ENCODE measurements at regions of chr3 and their contacts with region 1.

Region 1: DNA sequence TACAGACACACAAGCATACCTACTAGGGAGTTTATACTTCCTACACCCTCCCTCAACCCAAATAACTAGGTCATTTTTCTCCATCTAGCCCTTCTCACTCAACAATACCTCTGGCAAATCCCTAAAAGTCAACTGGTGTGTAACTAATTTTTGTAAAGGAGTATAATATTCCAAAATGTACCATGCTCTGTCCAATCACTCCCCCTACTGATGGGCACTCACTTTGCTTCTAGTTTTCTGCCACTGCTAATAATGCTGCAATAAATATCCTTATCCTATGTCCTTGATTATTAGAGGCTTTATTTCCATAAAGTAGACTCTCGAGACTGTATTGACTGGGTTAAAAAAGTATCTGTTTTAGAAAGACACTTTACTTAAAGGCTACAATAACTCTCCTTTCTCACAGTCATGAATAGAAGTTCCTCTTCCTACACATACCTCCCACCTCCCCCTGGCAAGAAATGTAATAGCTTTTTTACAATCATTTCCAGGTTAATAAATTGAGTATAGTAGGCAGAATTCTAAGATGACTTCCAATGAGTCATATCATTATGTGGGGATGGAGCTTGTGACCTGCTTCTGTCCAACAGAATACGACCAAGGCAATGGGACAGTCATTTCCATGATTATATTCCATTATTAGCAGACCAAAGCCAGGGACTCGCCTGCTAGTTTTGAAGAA is 30.0 kb downstream of the SHQ1 start:
- DNase-seq: no peak
- ATAC-seq: no peak
- H3K4me3 ChIP-seq: no peak overlapping the region
- H3K27ac ChIP-seq: peak overlapping the region in 1 of 4 donors; percentile 93
- H3K4me1 ChIP-seq: peaks cover 33 to 40% of the 10 kb centered on the region in 2 donors
- H3K27me3 ChIP-seq: no peaks in the 10 kb centered on the region
- CTCF ChIP-seq: peak in 3 of 5 experiments; percentile 25 to 53 (median 46)
- POLR2A ChIP-seq: no peak

Region 2: GRCh38 chr3:71710906-71711494 is 1107.2 kb before region 1 on chr3:
- in situ Hi-C with region 1: loop called in 2 of 4 experiments (anchors 25 kb)
- intact Hi-C with region 1: no loop called
- DNase-seq: no peak
- ATAC-seq: peak in 1 of 2 donors; percentile 62
- H3K4me3 ChIP-seq: no peak overlapping the region
- H3K27ac ChIP-seq: no peak overlapping the region
- H3K4me1 ChIP-seq: peaks cover 11 to 21% of the 10 kb centered on the region in 2 donors
- H3K27me3 ChIP-seq: no peaks in the 10 kb centered on the region
- CTCF ChIP-seq: peak; percentile 23 to 63 (median 51)
- POLR2A ChIP-seq: no peak

Region 3: GRCh38 chr3:71875461-71875947 is 942.7 kb before region 1 on chr3:
- in situ Hi-C with region 1: loop called in 3 of 4 experiments (anchors 10 kb)
- intact Hi-C with region 1: loop called (anchors 5 kb)
- DNase-seq: peak; percentile 30 to 48
- ATAC-seq: peak; percentile 68 to 86
- H3K4me3 ChIP-seq: no peak overlapping the region
- H3K27ac ChIP-seq: no peak overlapping the region
- H3K4me1 ChIP-seq: no peaks in the 10 kb centered on the region
- H3K27me3 ChIP-seq: no peaks in the 10 kb centered on the region
- CTCF ChIP-seq: peak; percentile 58 to 81 (median 67)
- POLR2A ChIP-seq: no peak

Region 4: DNA sequence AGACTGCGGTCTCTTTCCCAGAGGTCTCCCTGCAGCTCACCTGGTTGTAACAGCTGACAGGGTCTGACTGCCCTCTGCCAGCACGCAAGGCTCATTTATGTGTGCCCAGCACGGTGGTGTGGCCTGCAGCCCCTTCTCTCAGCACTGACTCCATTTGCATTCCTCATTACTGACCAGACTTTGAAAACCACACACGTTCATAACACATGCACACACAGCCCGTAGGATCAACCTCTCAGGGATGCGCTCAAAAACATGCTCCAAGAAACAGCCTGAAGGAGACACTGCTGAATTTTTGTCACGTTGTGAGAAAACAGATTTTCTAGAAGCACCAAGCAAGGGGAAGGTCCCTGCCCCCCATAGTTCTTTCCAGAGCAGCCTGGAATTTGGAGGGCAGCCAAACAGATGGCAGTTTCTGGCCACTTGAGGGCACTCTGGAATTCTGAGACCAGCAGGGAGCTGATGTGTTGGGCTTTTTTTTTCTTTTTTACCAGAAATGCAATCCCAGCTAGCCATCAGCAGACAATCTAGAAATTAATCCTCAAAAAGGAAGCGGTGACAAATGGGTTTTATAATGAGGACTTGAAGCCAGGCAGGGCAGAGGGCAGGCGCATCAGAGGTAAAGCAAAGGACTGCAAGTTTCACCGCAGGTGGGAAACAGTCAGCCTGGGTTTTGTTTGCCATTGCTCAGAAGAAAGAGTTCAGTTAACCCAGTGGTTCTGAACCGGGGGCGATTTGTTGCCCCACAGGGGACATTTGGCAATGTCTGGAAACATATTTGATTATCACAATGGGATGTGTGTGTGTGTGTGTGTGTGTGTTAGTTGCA is 862.8 kb before region 1 on chr3:
- in situ Hi-C with region 1: loop called (anchors 10 to 25 kb)
- intact Hi-C with region 1: loop called (anchors 5 kb)
- DNase-seq: peak; percentile 43 to 54
- ATAC-seq: peak; percentile 62 to 65
- H3K4me3 ChIP-seq: no peak overlapping the region
- H3K27ac ChIP-seq: no peak overlapping the region
- H3K4me1 ChIP-seq: peaks cover 0 to 6% of the 10 kb centered on the region in 2 donors
- H3K27me3 ChIP-seq: no peaks in the 10 kb centered on the region
- CTCF ChIP-seq: peak; percentile 59 to 79 (median 67)
- POLR2A ChIP-seq: no peak

Region 5: GRCh38 chr3:72123908-72124441 is 694.3 kb before region 1 on chr3:
- in situ Hi-C with region 1: no loop called
- intact Hi-C with region 1: loop called (anchors 10 kb)
- DNase-seq: peak; percentile 91 to 94
- ATAC-seq: peak; percentile 98 to 99
- H3K4me3 ChIP-seq: no peak overlapping the region
- H3K27ac ChIP-seq: peak overlapping the region; percentile 60 to 75 (median 67)
- H3K4me1 ChIP-seq: peaks cover 9 to 17% of the 10 kb centered on the region in 2 donors
- H3K27me3 ChIP-seq: no peaks in the 10 kb centered on the region
- CTCF ChIP-seq: no peak
- POLR2A ChIP-seq: peak in 1 of 2 donors; percentile 51

Region 6: DNA sequence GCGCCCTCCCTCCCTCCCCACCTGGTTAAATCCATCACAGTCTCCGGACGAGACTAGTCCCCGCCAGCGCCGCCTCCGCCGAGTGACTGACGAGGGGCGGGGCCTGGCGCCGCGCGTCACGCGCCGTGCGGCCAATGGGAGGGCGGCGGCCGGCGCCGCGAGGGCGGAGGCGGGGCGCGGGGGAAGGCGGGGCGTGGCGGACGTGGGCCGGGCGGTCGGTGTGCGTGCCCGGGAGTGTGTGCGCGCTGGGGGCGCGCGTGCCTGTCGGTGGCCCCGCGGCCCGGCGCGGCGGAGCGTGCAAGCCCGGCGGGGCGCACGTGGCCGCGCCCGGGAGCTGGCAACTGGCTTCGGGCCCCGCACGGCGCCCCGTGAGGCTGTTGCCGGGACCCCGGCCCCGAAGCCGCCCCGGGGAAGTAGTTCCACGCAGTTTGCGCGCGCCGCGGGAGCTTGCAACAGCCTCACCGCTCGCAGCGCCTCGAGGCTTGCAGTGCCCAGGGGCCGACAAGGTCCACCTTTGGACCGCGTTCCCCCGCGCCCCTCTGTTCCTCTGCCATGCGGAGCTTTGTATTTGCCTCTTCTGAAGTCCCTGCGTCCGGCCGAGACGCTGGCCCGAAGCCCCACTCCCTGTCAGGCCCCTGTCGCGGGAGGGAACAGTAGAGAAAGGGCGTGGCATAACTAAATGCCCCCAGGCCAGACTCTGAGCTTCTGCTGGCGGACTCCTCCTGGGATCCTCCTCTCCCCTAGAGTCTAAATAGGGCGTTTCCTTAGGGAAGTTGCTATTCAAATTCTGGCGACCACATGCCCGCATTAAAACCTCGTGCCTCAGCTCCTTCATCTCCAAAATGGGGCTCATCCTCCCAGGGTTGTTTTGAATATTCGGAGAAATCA is 370.9 kb before region 1 on chr3:
- in situ Hi-C with region 1: loop called in 1 of 4 experiments (anchors 10 kb)
- intact Hi-C with region 1: loop called (anchors 10 kb)
- DNase-seq: peak; percentile 82 to 87
- ATAC-seq: peak; percentile 91 to 92
- H3K4me3 ChIP-seq: peak overlapping the region; percentile 74 to 89 (median 79)
- H3K27ac ChIP-seq: peak overlapping the region; percentile 83 to 92 (median 91)
- H3K4me1 ChIP-seq: peaks cover 21 to 23% of the 10 kb centered on the region in 2 donors
- H3K27me3 ChIP-seq: no peaks in the 10 kb centered on the region
- CTCF ChIP-seq: peak in 1 of 5 experiments; percentile 7
- POLR2A ChIP-seq: peak; percentile 50 to 53

Region 7: DNA sequence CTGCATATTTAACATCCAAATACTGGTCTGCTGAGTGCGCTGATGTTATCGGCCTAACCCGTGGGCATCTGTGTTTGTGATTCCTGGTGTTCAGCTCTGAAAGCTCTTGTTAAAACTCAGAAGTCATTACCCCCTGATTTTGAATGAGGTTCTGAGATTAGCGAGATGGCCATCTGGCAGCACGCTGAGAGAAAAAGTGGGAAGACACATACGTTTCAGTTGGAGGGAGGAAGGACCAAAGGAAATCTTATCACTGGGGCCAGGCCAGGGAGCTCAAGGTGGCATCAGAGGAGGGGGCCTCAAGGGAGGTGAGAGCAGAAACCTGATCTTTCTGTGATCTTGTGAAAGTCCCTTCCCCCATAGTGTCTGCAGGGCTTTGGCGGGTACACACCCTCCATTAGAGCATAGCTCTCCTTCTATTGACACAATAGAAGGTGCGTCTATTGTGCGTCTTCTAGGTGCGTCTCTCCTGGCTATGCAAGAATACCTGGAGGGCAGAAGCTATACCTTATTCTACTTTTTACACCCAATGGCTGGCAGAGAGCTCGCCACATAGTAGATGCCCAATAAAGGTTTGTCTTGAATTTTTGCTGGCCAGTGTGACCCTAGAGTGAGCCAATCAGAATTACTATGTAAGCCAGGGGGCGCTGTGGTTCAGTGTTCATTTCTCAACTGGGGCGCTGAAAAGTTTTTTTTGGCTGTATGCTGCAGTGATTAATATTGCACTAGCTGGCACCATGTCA is 152.4 kb before region 1 on chr3:
- in situ Hi-C with region 1: no loop called
- intact Hi-C with region 1: loop called (anchors 5 kb)
- DNase-seq: no peak
- ATAC-seq: no peak
- H3K4me3 ChIP-seq: no peak overlapping the region
- H3K27ac ChIP-seq: no peak overlapping the region
- H3K4me1 ChIP-seq: no peaks in the 10 kb centered on the region
- H3K27me3 ChIP-seq: no peaks in the 10 kb centered on the region
- CTCF ChIP-seq: peak in 3 of 5 experiments; percentile 25 to 50 (median 36)
- POLR2A ChIP-seq: no peak

Region 8: GRCh38 chr3:72993391-72993790 is 175.2 kb after region 1 on chr3:
- in situ Hi-C with region 1: no loop called
- intact Hi-C with region 1: no loop called
- DNase-seq: no peak
- ATAC-seq: no peak
- H3K4me3 ChIP-seq: no peak overlapping the region
- H3K27ac ChIP-seq: no peak overlapping the region
- H3K4me1 ChIP-seq: peaks cover 10 to 12% of the 10 kb centered on the region in 2 donors
- H3K27me3 ChIP-seq: no peaks in the 10 kb centered on the region
- CTCF ChIP-seq: no peak
- POLR2A ChIP-seq: no peak

Region 9: GRCh38 chr3:73070675-73071575 is 252.7 kb after region 1 on chr3:
- in situ Hi-C with region 1: no loop called
- intact Hi-C with region 1: no loop called
- DNase-seq: no peak
- ATAC-seq: no peak
- H3K4me3 ChIP-seq: no peak overlapping the region
- H3K27ac ChIP-seq: no peak overlapping the region
- H3K4me1 ChIP-seq: peaks cover 4 to 16% of the 10 kb centered on the region in 2 donors
- H3K27me3 ChIP-seq: no peaks in the 10 kb centered on the region
- CTCF ChIP-seq: no peak
- POLR2A ChIP-seq: no peak

Measured in gastrocnemius medialis (tissue), 4 donors.